PC-9 (cell line): ENCODE measurements at regions of chr3 and their contacts with region 1.

Region 1: GRCh38 chr3:11236595-11237461 is 35.4 kb upstream of the ATG7 start:
- DNase-seq: peak; percentile 59 to 88
- H3K4me3 ChIP-seq: peak overlapping the region; percentile 33; the same call in 1 of the 2 replicates
- H3K27ac ChIP-seq: peak overlapping the region; percentile 99
- H3K4me1 ChIP-seq: peaks cover 41% of the 10 kb centered on the region
- H3K27me3 ChIP-seq: no peaks in the 10 kb centered on the region
- CTCF ChIP-seq: peak; percentile 93

Region 2: DNA sequence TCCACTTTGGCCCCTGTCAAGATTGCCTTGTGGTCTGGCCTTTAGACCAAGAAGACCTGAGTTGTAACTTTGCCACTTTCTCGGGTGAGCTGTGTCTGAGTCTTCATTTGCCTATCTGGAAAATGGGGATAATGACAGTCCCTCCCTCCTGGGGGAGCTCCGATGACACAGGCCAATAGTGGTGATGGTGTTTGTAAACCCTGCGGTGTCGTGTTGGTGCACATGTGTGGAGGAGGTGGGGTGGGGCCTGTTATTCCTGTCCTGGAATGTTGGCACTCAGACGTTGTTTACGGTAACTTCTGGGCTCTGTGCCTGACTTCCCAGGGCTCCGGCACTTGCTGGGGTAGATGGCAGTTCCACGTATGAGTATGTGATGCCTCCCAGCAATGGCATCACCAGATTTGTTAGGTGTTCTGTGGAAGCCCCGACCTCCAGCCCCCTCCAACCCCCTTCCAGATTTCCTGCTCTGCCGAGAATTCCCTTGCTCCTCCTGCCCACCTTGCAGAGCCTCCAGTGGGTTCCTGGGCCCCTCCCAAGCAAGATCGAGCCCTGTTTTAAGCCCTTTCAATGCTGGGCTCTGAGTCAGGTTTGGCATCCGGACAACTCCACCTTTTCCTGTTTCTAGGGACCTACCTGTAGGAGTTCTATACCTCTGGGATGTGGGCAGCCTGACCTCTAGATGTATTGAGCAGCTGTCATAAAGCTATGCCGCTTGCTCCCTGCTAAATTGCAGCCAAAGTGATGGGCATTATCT is 51.1 kb before region 1 on chr3:
- CTCF ChIA-PET with region 1: no interaction called
- POLR2A ChIA-PET with region 1: no interaction called
- intact Hi-C with region 1: loop called (anchors 1 kb)
- DNase-seq: peak; percentile 84 to 90
- H3K4me3 ChIP-seq: peak overlapping the region; percentile 12; the same call in 1 of the 2 replicates
- H3K27ac ChIP-seq: peak overlapping the region; percentile 49
- H3K4me1 ChIP-seq: peaks cover 45% of the 10 kb centered on the region
- H3K27me3 ChIP-seq: no peaks in the 10 kb centered on the region
- CTCF ChIP-seq: no peak; the same call in 1 of the 2 replicates

Region 3: DNA sequence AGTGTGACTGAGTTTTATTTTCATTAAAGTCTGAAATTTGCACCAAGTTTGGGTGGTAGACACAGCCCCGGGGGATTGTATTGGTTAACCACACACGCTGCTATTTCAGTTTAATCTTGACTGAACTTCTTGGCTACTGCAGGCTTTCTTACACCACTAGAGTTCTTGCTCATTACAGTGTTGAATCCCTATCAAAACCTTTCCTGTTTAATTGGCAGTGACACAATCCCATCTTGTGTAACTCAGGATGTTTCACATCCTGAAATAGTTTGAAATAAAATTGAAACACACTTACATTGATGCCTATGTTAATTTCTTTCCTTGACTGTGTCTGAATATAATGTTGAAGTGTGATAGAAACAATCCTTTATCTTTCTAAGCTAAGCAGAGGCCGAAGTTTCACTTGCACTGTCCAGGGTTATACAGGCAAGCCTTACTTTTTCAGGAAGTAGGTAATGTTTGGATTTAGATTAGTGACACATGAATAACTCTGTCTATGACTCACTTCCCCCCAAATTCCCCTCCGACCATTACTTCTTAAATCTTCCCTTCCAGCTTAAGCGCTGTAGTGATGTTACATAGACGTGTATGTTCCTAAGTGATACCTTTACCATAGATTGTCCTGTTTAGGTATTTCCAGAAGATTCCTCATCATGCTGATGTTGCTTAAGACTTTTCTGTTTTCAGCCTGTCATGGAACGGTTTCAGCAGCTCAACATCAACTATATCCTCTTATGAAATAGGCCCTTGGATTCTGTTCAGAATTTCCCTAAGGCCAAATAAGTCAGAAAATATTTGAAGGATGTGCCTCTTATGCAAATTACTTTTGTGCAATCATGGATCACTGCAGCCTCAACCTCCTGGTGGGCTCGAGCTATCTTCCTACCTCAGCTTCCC is 52.2 kb after region 1 on chr3:
- CTCF ChIA-PET with region 1: interaction called, 3 read pairs
- POLR2A ChIA-PET with region 1: interaction called, 3 read pairs
- intact Hi-C with region 1: loop called (anchors 1 kb)
- DNase-seq: peak; percentile 35 to 92
- H3K4me3 ChIP-seq: peak overlapping the region; percentile 42; the same call in 1 of the 2 replicates
- H3K27ac ChIP-seq: peak overlapping the region; percentile 99
- H3K4me1 ChIP-seq: peaks cover 78% of the 10 kb centered on the region
- H3K27me3 ChIP-seq: no peaks in the 10 kb centered on the region
- CTCF ChIP-seq: no peak; the same call in 1 of the 2 replicates

Region 4: DNA sequence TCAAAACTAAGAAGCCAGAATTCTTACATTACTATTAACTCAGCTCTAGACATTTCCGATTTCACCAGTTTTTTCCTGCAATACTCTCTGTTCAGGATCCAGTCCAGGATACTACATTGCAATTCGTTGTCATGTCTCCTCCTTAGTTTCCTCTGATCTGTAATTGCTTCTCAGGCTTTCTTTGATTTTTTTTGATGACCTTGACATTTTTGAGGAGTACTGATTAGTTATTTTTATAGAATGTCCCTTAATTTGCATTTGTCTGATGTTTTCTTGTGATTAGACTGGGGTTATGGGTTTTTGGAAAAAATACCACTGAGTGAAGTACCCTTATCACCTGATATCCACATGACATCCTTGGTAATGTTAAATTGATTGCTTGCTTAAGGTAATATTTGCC is 93.0 kb after region 1 on chr3:
- CTCF ChIA-PET with region 1: interaction called, 14 read pairs
- POLR2A ChIA-PET with region 1: interaction called, 3 read pairs
- intact Hi-C with region 1: loop called (anchors 1 kb)
- DNase-seq: no peak
- H3K4me3 ChIP-seq: no peak overlapping the region
- H3K27ac ChIP-seq: no peak overlapping the region
- H3K4me1 ChIP-seq: peaks cover 8% of the 10 kb centered on the region
- H3K27me3 ChIP-seq: no peaks in the 10 kb centered on the region
- CTCF ChIP-seq: no peak

Region 5: GRCh38 chr3:11379233-11379823 is 142.5 kb after region 1 on chr3:
- CTCF ChIA-PET with region 1: no interaction called
- POLR2A ChIA-PET with region 1: no interaction called
- intact Hi-C with region 1: no loop called
- DNase-seq: peak in 1 of 2 experiments; percentile 13
- H3K4me3 ChIP-seq: no peak overlapping the region
- H3K27ac ChIP-seq: no peak overlapping the region
- H3K4me1 ChIP-seq: peaks cover 7% of the 10 kb centered on the region
- H3K27me3 ChIP-seq: no peaks in the 10 kb centered on the region
- CTCF ChIP-seq: peak; percentile 82

Region 6: GRCh38 chr3:11643605-11644087 is 406.8 kb after region 1 on chr3 and contains the start of gene VGLL4:
- CTCF ChIA-PET with region 1: interaction called, 3 read pairs
- POLR2A ChIA-PET with region 1: no interaction called
- intact Hi-C with region 1: loop called (anchors 10 kb)
- DNase-seq: peak; percentile 71 to 73
- H3K4me3 ChIP-seq: peak within 1 kb of the TSS; percentile 77
- H3K27ac ChIP-seq: peak within 1 kb of the TSS; percentile 66
- H3K4me1 ChIP-seq: peaks cover 25% of the 10 kb centered on the region
- H3K27me3 ChIP-seq: no peaks in the 10 kb centered on the region
- CTCF ChIP-seq: no peak
- total RNA-seq, gene VGLL4: 39.1 and 42.2 TPM in 2 replicates